ENCODE measurements at regions of chr2 and their contacts with region 1.

Region 1: GRCh38 chr2:68715353-68716041 is 19.1 kb upstream of the ARHGAP25 start:
- DNase-seq: peak; percentile 77
- H3K4me3 Mint-ChIP-seq: peak overlapping the region; percentile 8
- H3K27ac Mint-ChIP-seq: peak overlapping the region; percentile 80
- H3K4me1 Mint-ChIP-seq: peaks cover 81% of the 10 kb centered on the region
- H3K27me3 Mint-ChIP-seq: no peaks in the 10 kb centered on the region

Region 2: DNA sequence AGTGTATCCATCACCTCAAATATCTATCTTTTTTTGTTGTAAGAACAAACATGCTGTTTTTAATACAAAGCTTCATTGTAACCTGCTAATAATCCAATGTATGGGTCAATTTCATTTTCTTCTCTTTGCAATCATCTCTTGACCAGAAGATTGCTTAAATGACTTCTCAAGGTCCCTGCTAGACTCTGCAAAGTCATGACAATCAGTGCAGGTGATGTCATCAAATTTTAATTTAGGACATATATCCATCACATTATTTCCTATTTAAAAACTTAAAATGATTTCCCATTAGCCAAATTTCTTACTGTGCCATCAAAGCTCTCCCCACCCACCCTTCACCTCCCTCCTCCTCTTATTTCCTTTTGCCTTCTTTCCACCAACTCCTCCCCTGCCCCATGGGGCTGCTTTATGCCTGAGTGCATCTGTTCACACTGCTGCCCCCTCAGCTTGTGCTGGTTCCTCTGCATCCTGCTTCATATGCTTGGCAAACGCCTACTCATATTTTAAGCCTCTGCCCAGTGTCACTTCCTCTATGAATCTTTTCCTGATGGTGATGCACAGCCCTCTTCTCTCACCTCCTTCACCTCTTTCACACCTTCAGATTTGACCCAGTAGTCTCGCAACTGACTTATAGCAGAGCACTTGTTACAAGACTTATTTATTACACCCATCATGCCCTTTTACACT is 330.1 kb before region 1 on chr2:
- CTCF ChIA-PET with region 1: no interaction called
- POLR2A ChIA-PET with region 1: no interaction called
- intact Hi-C with region 1: loop called (anchors 5 kb)
- DNase-seq: peak; percentile 62
- H3K4me3 Mint-ChIP-seq: no peak overlapping the region
- H3K27ac Mint-ChIP-seq: no peak overlapping the region
- H3K4me1 Mint-ChIP-seq: peaks cover 41% of the 10 kb centered on the region
- H3K27me3 Mint-ChIP-seq: no peaks in the 10 kb centered on the region

Region 3: GRCh38 chr2:68653538-68653982 is 61.9 kb before region 1 on chr2:
- CTCF ChIA-PET with region 1: no interaction called
- POLR2A ChIA-PET with region 1: no interaction called
- intact Hi-C with region 1: loop called (anchors 2 kb)
- DNase-seq: peak; percentile 71
- H3K4me3 Mint-ChIP-seq: no peak overlapping the region
- H3K27ac Mint-ChIP-seq: peak overlapping the region; percentile 20
- H3K4me1 Mint-ChIP-seq: peaks cover 34% of the 10 kb centered on the region
- H3K27me3 Mint-ChIP-seq: peaks cover 20% of the 10 kb centered on the region

Region 4: DNA sequence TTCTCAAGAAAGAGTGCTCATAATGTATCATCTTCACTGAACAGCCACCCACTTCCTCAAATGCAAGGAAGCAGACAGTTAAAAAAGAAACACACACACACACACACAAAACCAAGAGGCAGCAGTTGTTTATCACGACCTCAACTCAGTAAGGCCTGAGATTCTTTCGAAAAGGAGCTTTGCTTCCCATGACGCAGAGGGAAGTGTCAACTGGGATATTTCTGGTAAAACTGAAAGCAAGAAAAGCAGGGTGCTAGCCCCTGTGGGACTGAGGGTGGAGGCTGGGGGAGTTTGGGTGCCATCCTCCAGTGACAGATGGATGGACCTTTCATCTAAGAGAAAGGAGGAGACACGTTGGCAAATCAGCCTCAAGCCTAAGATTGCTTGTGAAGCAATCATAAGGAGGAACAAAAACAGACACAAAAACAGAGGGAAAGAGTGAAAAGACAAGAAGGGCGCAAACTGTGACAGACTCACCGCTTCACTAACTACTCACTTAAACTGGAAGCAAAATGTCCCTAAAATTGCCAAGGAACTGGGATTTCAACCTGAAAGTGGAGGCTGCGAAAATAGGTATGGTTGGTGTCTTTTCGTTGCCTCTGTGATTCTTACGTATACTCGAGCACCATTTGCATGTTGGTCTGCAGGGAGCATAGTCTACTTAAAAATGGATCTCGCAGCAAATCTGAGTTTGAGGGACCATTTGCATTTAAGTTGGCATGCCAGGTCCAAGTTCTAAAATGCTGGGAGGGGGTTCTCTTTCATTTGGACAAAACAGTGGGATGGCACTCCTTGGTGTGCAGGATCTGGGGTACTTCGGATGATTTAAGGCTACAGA is 19.4 kb after region 1 on chr2 and contains the start of gene ARHGAP25:
- CTCF ChIA-PET with region 1: interaction called, 22 read pairs
- POLR2A ChIA-PET with region 1: interaction called, 31 read pairs
- intact Hi-C with region 1: loop called (anchors 1 kb)
- DNase-seq: peak; percentile 87
- H3K4me3 Mint-ChIP-seq: no peak within 1 kb of the TSS
- H3K27ac Mint-ChIP-seq: no peak within 1 kb of the TSS
- H3K4me1 Mint-ChIP-seq: peaks cover 36% of the 10 kb centered on the region
- H3K27me3 Mint-ChIP-seq: no peaks in the 10 kb centered on the region
- total RNA-seq, gene ARHGAP25: 79.8 to 87.7 TPM

Region 5: GRCh38 chr2:68766376-68766845 is 50.9 kb after region 1 on chr2:
- CTCF ChIA-PET with region 1: interaction called, 6 read pairs
- POLR2A ChIA-PET with region 1: interaction called, 7 read pairs
- intact Hi-C with region 1: loop called (anchors 1 kb)
- DNase-seq: peak; percentile 81
- H3K4me3 Mint-ChIP-seq: peak overlapping the region; percentile 76
- H3K27ac Mint-ChIP-seq: peak overlapping the region; percentile 98
- H3K4me1 Mint-ChIP-seq: peaks cover 96% of the 10 kb centered on the region
- H3K27me3 Mint-ChIP-seq: no peaks in the 10 kb centered on the region

Region 6: GRCh38 chr2:68837164-68837860 is 121.8 kb after region 1 on chr2:
- CTCF ChIA-PET with region 1: interaction called, 16 read pairs
- POLR2A ChIA-PET with region 1: no interaction called
- intact Hi-C with region 1: loop called (anchors 1 kb)
- DNase-seq: peak; percentile 77
- H3K4me3 Mint-ChIP-seq: no peak overlapping the region
- H3K27ac Mint-ChIP-seq: peak overlapping the region; percentile 63
- H3K4me1 Mint-ChIP-seq: peaks cover 47% of the 10 kb centered on the region
- H3K27me3 Mint-ChIP-seq: no peaks in the 10 kb centered on the region